Mammary epithelial cell (primary cell): ENCODE measurements at regions of chr2 and their contacts with region 1.

Region 1: GRCh38 chr2:46876741-46877384 is 38.7 kb downstream of the MCFD2 start:
- DNase-seq: peak; percentile 84
- H3K4me3 ChIP-seq: no peak overlapping the region
- H3K27ac ChIP-seq: no peak overlapping the region
- H3K4me1 ChIP-seq: peaks cover 27% of the 10 kb centered on the region
- H3K27me3 ChIP-seq: no peaks in the 10 kb centered on the region
- CTCF ChIP-seq: peak; percentile 46 to 65

Region 2: DNA sequence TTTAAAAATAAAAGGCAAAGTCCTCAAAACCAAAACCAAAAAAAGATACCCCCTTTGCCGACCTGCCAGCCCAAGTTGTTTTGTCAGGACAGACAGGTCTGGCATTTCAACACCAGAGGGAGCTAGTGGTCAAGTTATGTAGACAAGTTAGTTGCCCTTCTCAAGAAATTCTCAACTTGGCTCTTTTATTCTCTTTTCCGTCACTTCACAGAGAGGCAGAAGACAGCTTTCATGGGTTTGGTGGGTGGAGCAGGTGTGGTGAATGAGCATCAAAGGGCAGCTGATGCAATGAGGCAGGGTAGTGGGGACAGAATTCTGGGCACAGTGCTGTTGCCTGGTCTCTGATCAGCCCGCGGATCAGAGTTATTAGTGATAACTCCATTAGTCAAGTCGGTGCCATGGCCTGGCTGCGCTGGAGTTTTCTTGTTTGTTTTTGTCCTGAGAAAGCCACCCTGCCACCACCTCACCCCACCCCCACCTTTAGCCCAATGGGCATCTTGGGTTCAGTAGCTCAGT is 883.3 kb before region 1 on chr2:
- CTCF ChIA-PET with region 1: no interaction called
- dilution Hi-C with region 1: no loop called
- in situ Hi-C with region 1: no loop called
- intact Hi-C with region 1: loop called (anchors 10 kb)
- DNase-seq: peak; percentile 58
- H3K4me3 ChIP-seq: no peak overlapping the region
- H3K27ac ChIP-seq: no peak overlapping the region
- H3K4me1 ChIP-seq: peaks cover 19% of the 10 kb centered on the region
- H3K27me3 ChIP-seq: no peaks in the 10 kb centered on the region
- CTCF ChIP-seq: peak; percentile 78 to 79

Region 3: GRCh38 chr2:46632349-46632748 is 244.5 kb before region 1 on chr2:
- CTCF ChIA-PET with region 1: no interaction called
- dilution Hi-C with region 1: no loop called
- in situ Hi-C with region 1: no loop called
- intact Hi-C with region 1: loop called (anchors 1 kb)
- DNase-seq: peak; percentile 41
- H3K4me3 ChIP-seq: no peak overlapping the region
- H3K27ac ChIP-seq: no peak overlapping the region
- H3K4me1 ChIP-seq: no peaks in the 10 kb centered on the region
- H3K27me3 ChIP-seq: peaks cover 8% of the 10 kb centered on the region
- CTCF ChIP-seq: peak; percentile 57 to 60

Region 4: GRCh38 chr2:46650556-46651001 is 226.3 kb before region 1 on chr2:
- CTCF ChIA-PET with region 1: no interaction called
- dilution Hi-C with region 1: loop called (anchors 25 kb)
- in situ Hi-C with region 1: no loop called
- intact Hi-C with region 1: no loop called
- DNase-seq: peak; percentile 69
- H3K4me3 ChIP-seq: no peak overlapping the region
- H3K27ac ChIP-seq: no peak overlapping the region
- H3K4me1 ChIP-seq: peaks cover 28% of the 10 kb centered on the region
- H3K27me3 ChIP-seq: no peaks in the 10 kb centered on the region
- CTCF ChIP-seq: peak; percentile 92 to 95

Region 5: GRCh38 chr2:46657042-46657504 is 219.8 kb before region 1 on chr2:
- CTCF ChIA-PET with region 1: interaction called, 5 read pairs
- dilution Hi-C with region 1: loop called (anchors 25 kb)
- in situ Hi-C with region 1: no loop called
- intact Hi-C with region 1: loop called (anchors 1 kb)
- DNase-seq: peak; percentile 25
- H3K4me3 ChIP-seq: no peak overlapping the region
- H3K27ac ChIP-seq: no peak overlapping the region
- H3K4me1 ChIP-seq: peaks cover 6% of the 10 kb centered on the region
- H3K27me3 ChIP-seq: no peaks in the 10 kb centered on the region
- CTCF ChIP-seq: peak; percentile 42 to 54

Region 6: GRCh38 chr2:46776687-46777327 is 100.1 kb before region 1 on chr2:
- CTCF ChIA-PET with region 1: no interaction called
- dilution Hi-C with region 1: no loop called
- in situ Hi-C with region 1: no loop called
- intact Hi-C with region 1: loop called (anchors 2 kb)
- DNase-seq: peak; percentile 46
- H3K4me3 ChIP-seq: no peak overlapping the region
- H3K27ac ChIP-seq: no peak overlapping the region
- H3K4me1 ChIP-seq: peaks cover 21% of the 10 kb centered on the region
- H3K27me3 ChIP-seq: no peaks in the 10 kb centered on the region
- CTCF ChIP-seq: peak; percentile 61 to 64

Region 7: GRCh38 chr2:46803911-46804670 is 72.8 kb before region 1 on chr2:
- CTCF ChIA-PET with region 1: interaction called, 6 read pairs
- dilution Hi-C with region 1: loop called (anchors 5 kb)
- in situ Hi-C with region 1: no loop called
- intact Hi-C with region 1: loop called (anchors 1 kb)
- DNase-seq: peak; percentile 94
- H3K4me3 ChIP-seq: no peak overlapping the region
- H3K27ac ChIP-seq: peak overlapping the region; percentile 92
- H3K4me1 ChIP-seq: peaks cover 54% of the 10 kb centered on the region
- H3K27me3 ChIP-seq: no peaks in the 10 kb centered on the region
- CTCF ChIP-seq: no peak

Region 8: DNA sequence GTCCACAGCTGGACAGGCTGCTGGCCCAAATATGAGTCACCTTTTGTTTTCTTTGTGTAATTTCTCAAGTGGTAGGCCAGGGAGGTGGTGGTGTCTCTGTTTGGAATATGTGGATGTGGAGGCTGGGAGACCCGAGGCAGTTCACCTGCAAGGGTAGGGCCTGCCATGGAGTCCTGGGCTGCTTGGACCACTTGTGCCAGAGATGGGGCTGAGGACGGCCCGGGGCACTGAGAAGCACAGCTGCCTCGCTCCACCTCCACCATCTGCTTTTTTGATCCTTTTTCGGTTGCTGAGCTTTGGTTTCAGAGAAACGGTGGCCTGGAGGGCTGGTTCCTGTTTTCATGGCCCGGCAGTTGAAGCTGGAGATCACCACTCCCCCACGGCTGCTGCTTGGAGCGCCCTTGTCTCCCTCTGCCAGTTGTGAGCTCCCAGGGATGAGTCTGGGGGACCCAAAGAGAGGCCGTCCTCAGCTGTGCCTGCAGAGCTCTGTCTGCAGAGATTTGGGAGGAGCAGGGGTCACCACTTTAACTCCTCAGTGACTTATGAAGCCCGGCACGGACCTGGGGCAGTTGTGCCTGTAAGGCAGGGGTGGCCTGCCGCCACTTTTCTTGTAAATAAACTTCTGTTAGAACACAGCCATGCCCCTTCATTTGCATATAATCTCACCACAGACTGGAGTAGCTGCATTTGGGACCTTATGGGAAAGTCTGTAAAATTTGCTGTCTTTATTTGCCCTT is 106.4 kb after region 1 on chr2:
- CTCF ChIA-PET with region 1: no interaction called
- dilution Hi-C with region 1: no loop called
- in situ Hi-C with region 1: no loop called
- intact Hi-C with region 1: no loop called
- DNase-seq: no peak
- H3K4me3 ChIP-seq: no peak overlapping the region
- H3K27ac ChIP-seq: no peak overlapping the region
- H3K4me1 ChIP-seq: peaks cover 40% of the 10 kb centered on the region
- H3K27me3 ChIP-seq: no peaks in the 10 kb centered on the region
- CTCF ChIP-seq: no peak